ENCODE measurements at regions of chr1 and their contacts with region 1.

Region 1: GRCh38 chr1:192545896-192546521 is 29.6 kb upstream of the RGS1 start:
- DNase-seq: no peak
- ATAC-seq: peak; percentile 66
- H3K4me3 Mint-ChIP-seq: peak overlapping the region; percentile 65
- H3K27ac Mint-ChIP-seq: peak overlapping the region; percentile 84
- H3K4me1 Mint-ChIP-seq: peaks cover 60% of the 10 kb centered on the region
- H3K27me3 Mint-ChIP-seq: no peaks in the 10 kb centered on the region
- CTCF ChIP-seq: no peak

Region 2: DNA sequence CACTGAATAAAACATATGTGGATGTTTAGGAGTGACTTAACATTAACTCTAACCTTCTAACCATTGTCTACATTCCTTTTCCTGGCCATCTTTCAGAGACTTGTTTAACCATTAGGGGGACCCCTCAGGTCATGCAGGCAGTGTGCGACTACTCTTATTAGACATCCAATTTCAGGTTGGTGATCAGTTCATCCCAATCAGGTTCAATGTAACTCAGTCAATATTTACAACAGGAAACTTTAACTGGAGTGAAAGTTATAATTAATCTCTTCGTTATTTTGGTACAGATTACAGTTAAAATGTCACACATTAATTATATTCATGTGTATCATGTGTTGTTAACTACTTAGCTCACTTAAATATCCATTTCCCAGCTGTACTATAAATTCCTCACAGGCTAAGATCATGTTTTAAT is 39.3 kb before region 1 on chr1:
- CTCF ChIA-PET with region 1: no interaction called
- POLR2A ChIA-PET with region 1: interaction called, 6 read pairs
- intact Hi-C with region 1: loop called (anchors 1 kb)
- DNase-seq: no peak
- ATAC-seq: peak; percentile 79
- H3K4me3 Mint-ChIP-seq: no peak overlapping the region
- H3K27ac Mint-ChIP-seq: no peak overlapping the region
- H3K4me1 Mint-ChIP-seq: peaks cover 5% of the 10 kb centered on the region
- H3K27me3 Mint-ChIP-seq: peaks cover 8% of the 10 kb centered on the region
- CTCF ChIP-seq: no peak

Region 3: GRCh38 chr1:192530254-192530653 is 15.8 kb before region 1 on chr1:
- CTCF ChIA-PET with region 1: interaction called, 3 read pairs
- POLR2A ChIA-PET with region 1: interaction called, 3 read pairs
- intact Hi-C with region 1: loop called (anchors 1 kb)
- DNase-seq: no peak
- ATAC-seq: peak; percentile 98
- H3K4me3 Mint-ChIP-seq: peak overlapping the region; percentile 60
- H3K27ac Mint-ChIP-seq: peak overlapping the region; percentile 65
- H3K4me1 Mint-ChIP-seq: peaks cover 23% of the 10 kb centered on the region
- H3K27me3 Mint-ChIP-seq: no peaks in the 10 kb centered on the region
- CTCF ChIP-seq: no peak

Measured in activated B cell treated with CpG ODN at 0.5 μM for 24 hours (primary cell).